KBM-7 (cell line): ENCODE measurements at regions of chr22 and their contacts with region 1.

Region 1: DNA sequence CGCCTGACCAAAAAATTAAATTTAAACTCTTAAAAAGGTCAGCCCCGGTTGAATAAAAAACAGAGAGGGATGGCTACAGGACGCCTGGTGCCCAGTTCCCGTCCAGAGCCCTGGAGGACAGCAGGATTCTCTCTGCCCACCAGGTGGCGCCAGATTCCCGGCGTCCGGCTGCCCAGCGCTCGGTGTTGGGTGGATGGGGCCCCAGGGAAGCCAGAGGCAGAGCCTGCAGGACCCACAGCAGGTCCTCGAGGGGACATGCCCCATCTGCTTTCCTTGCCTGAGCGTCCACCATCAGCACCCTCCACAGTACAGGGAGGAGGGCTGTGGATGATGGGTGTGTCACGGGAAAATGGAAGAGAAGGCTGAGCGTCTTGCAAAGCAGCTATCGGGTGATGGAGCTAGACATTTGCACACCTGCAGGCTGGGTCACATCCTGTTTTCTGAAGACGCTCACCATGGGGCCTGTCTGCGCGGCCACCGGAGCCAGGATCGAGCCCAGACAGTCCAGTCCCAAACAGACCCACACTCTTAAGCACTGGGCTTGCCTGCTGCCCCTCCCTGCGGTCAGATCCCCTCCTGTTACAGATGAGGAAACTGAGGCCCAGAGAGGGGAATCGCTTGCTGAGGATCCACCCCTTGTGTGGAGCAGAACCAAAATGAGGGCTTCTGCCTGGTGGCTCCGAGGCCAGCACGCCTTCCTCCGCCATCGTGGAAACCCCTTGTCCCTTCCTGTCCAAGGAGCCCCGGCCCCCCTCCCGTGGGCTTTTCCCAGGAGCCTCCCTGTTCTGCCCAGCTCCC is 18.5 kb upstream of the CBX7 start:
- DNase-seq: peak; percentile 79

Region 2: DNA sequence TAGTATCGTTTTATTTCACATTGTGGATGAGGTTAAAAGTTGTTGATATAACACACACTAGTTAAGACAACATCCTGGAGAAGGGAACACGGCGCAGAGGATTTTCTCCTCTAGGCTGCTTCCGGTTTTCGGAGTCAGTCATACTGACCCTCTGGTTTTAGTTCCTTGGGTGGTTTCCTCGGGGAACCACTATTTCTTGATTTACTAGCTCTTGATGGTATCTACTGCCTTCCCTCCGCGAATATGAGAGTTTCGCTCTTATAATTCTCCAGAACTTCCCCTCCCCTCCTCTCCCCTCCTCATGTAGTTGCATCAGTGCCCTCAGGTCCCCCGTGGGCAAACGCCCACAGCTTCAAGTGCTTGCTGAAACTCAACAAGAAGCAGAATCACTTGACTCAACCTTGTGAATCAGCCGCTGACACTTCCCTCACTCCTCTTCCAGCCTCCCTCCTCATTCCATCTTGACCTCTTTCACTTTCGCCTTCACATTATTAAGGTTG is 229.5 kb before region 1 on chr22:
- in situ Hi-C with region 1: no loop called
- DNase-seq: peak; percentile 22

Region 3: DNA sequence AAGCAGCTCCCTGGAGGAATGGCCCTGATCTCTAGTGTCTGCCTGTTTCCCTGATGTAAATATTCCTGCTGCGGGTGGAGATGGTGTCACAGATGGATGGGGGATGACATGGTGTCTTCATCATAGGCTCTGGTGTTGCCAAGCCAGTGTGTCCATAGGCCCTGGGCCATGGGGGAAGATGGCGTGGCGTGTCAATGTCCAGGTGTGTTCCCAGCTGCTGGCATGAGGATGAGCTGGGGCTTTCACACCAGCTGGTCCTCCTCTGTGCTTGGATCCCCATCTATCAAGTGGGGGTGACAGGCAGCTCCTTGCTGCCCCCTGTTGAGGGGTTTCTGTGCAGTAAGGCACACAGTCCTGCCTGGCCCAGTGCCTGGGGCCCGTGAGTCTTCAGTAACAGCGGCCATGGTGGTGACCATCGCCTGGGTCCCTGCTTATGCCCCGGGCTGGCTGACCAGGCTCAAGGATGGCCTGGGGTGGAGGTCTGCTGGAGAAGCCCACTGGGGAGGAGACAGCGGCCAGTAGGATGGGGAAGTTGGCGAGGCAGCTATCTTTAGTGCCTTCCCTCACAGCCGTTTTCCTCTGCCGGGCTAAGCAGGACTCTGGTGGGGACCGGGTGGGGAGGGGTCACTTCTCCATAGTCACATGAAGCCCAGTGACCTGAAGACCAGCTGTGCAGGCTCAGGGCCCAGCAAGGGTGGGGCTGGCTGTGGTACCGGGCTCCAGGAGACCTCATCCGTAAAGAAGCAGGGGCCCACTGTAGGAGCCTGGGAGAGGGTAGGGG is 135.7 kb after region 1 on chr22:
- in situ Hi-C with region 1: loop called (anchors 10 kb)
- DNase-seq: no peak